ENCODE measurements at regions of chr7 and their contacts with region 1.

Region 1: DNA sequence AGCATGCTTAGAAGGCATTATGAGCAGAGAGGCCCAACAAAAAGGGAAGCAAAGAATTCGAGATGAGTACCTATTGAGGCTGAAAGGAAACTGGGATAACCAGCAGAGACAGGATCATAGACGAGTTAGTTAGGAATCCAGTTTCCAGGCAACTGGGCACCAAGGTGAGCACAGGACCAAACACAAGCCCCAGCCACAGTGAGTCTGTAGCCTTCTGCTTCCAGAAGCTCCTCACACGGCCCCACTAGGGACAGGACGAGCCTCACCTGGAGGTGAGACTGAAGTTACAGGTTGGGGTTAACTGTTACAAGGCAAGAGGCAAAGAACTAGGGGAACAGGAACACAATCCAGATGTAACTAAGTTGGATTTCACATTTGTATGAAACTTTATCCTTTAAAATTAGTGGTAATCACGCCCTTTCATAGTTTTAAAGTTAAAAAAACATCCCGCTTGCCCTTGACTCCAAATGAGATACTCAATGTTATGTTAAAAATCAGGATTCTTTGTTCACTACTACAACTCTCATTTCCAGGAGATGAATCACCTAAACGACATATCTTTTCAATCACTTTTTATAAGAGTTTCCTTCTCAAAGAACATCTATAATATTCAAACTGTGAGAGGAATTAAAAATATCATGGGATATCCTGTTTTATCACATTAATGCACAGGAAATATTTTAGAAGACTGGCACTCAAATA is 42.2 kb downstream of the CADPS2 start:
- DNase-seq: peak; percentile 75
- H3K4me3 ChIP-seq: no peak overlapping the region
- H3K27ac ChIP-seq: peak overlapping the region; percentile 65
- H3K4me1 ChIP-seq: peaks cover 68% of the 10 kb centered on the region
- H3K27me3 ChIP-seq: no peaks in the 10 kb centered on the region
- CTCF ChIP-seq: no peak

Region 2: GRCh38 chr7:122831436-122831835 is 12.6 kb before region 1 on chr7:
- CTCF ChIA-PET with region 1: no interaction called
- POLR2A ChIA-PET with region 1: no interaction called
- intact Hi-C with region 1: no loop called
- DNase-seq: no peak
- H3K4me3 ChIP-seq: no peak overlapping the region
- H3K27ac ChIP-seq: no peak overlapping the region
- H3K4me1 ChIP-seq: peaks cover 4% of the 10 kb centered on the region
- H3K27me3 ChIP-seq: no peaks in the 10 kb centered on the region
- CTCF ChIP-seq: no peak

Region 3: DNA sequence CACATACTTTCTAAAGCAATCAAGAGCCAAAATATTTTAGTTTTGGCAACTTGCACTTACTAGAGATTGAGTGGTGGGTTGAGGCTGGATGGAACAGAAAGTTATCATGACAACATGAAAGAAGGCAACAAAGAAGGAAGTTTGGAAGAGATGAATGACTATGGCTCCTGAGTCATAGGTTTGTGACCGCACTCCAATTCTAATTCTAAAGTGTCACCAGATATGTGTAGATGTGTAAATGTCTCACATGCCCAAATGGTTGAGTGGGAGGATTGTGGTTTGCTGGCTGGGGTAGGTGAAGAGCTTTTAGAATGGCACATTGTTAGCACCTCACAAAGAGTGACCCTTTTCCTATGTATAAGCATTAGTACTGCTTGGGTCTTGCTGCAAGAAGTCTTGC is 131.3 kb after region 1 on chr7:
- CTCF ChIA-PET with region 1: no interaction called
- POLR2A ChIA-PET with region 1: no interaction called
- intact Hi-C with region 1: loop called (anchors 1 kb)
- DNase-seq: no peak
- H3K4me3 ChIP-seq: no peak overlapping the region
- H3K27ac ChIP-seq: peak overlapping the region; percentile 35
- H3K4me1 ChIP-seq: peaks cover 36% of the 10 kb centered on the region
- H3K27me3 ChIP-seq: no peaks in the 10 kb centered on the region
- CTCF ChIP-seq: no peak

Measured in A673 (cell line).